Esophagus squamous epithelium (tissue), 5 donors: ENCODE measurements at regions of chr17 and their contacts with region 1.

Region 1: DNA sequence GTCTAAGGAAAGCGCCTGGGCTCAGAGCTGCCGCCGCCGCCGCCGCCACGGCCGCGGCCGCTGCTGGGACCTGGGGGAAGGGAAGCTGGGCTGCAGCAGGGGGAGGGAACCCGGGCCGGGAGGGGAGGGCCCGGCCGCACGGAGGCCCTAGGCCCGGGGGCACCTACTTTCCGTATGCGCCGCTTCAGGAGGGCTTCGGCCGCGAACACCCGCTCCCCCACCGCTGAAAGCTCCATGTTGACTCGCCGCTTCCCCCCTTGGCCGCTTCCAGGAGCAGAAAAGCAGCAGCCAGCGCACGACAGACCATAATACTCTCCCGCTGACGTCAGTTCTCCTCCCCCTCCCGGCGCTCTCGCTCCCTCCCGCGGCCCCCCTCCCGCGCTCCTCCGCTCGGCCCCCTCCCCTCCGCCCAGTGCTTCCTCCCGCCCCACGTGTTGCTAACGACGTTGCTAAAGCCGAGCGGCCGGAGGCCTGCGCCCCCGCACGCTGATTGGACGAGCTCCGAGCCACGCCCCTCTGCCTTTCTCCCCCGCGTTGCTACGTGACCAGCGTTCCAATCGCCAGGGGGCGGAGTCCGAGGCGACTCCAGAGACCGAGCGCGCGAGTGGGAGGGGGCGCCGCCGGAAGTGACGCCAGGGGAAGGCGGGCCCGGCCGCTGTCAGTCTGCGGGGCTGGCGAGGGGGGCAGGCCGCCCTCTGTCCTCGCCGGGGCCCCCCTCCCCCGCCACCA is at the start of gene CBX8:
- DNase-seq: peak; percentile 96
- H3K4me3 ChIP-seq: peak within 1 kb of the TSS; percentile 58 to 92 (median 80)
- H3K27ac ChIP-seq: peak within 1 kb of the TSS; percentile 65 to 91 (median 84)
- H3K4me1 ChIP-seq: peaks cover 59 to 87% (median 59%) of the 10 kb centered on the region in 3 donors
- H3K27me3 ChIP-seq: peaks cover 17 to 85% (median 56%) of the 10 kb centered on the region in 4 donors
- CTCF ChIP-seq: peak in 3 of 6 experiments; percentile 33 to 64 (median 45)
- POLR2A ChIP-seq: peak in 1 of 4 donors; percentile 59
- total RNA-seq, gene CBX8: 2.3 to 4.7 (median 2.6) TPM

Region 2: GRCh38 chr17:79839363-79840268 is 42.7 kb after region 1 on chr17 and contains the start of gene CBX4:
- intact Hi-C with region 1: loop called (anchors 5 kb)
- DNase-seq: peak; percentile 74
- H3K4me3 ChIP-seq: peak within 1 kb of the TSS; percentile 76 to 90 (median 88)
- H3K27ac ChIP-seq: peak within 1 kb of the TSS; percentile 95 to 99 (median 98)
- H3K4me1 ChIP-seq: peaks cover 71 to 90% (median 73%) of the 10 kb centered on the region in 3 donors
- H3K27me3 ChIP-seq: peaks cover 21 to 51% (median 35%) of the 10 kb centered on the region in 4 donors
- CTCF ChIP-seq: peak; percentile 47 to 95 (median 82)
- POLR2A ChIP-seq: peak in 2 of 4 donors; percentile 82 to 88
- total RNA-seq, gene CBX4: 9.0 to 26.3 (median 17.1) TPM